Caco-2 (cell line): ENCODE measurements at regions of chr11 and their contacts with region 1.

Region 1: DNA sequence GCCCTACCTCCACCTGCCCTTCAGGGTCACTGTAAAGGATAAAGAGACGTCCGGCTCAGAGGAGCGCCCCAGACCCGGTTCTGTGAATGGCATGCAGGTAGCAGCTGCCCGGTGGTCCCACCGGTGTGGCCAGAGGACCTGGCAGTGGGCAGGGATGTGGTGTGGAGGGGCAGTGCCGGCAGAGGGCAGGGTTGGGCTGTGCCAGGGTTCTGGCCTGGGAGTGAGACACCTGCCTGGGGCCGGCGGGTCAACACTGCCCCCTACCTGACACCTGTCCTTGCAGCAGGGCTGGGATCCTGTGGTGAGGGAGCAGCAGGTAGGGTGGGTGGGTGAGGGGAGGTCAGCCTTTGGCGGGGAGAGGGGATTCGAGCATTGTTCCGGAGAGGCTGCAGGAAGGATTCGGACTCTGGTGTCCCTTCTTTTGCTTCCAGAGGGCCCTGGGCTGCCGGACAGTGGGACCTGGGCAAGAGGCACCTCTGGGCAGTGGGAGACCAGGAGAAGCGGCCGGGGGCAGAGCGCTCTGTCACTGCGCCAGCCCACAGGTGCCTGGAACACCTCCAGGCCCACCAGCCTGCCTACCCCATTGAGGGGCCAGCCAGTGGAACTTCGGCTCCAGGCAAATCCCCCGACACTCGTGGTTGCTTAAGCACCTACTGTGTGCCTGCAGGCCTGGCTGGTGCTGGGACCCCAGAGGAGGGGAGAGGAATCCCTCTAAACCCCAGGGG is 1.6 kb upstream of the PHLDA2 start:
- DNase-seq: peak; percentile 92 to 95
- H3K4me3 ChIP-seq: peak overlapping the region; percentile 91
- H3K4me3 Mint-ChIP-seq: peak overlapping the region; percentile 73
- H3K27ac Mint-ChIP-seq: peak overlapping the region; percentile 79
- H3K4me1 ChIP-seq: peaks cover 19% of the 10 kb centered on the region
- H3K4me1 Mint-ChIP-seq: no peaks in the 10 kb centered on the region
- H3K27me3 ChIP-seq: 0 out of 2 replicates have a peak, but pooled peaks cover 2% of the 10 kb centered on the region
- H3K27me3 Mint-ChIP-seq: no peaks in the 10 kb centered on the region
- CTCF ChIP-seq: peak; percentile 80 to 95

Region 2: DNA sequence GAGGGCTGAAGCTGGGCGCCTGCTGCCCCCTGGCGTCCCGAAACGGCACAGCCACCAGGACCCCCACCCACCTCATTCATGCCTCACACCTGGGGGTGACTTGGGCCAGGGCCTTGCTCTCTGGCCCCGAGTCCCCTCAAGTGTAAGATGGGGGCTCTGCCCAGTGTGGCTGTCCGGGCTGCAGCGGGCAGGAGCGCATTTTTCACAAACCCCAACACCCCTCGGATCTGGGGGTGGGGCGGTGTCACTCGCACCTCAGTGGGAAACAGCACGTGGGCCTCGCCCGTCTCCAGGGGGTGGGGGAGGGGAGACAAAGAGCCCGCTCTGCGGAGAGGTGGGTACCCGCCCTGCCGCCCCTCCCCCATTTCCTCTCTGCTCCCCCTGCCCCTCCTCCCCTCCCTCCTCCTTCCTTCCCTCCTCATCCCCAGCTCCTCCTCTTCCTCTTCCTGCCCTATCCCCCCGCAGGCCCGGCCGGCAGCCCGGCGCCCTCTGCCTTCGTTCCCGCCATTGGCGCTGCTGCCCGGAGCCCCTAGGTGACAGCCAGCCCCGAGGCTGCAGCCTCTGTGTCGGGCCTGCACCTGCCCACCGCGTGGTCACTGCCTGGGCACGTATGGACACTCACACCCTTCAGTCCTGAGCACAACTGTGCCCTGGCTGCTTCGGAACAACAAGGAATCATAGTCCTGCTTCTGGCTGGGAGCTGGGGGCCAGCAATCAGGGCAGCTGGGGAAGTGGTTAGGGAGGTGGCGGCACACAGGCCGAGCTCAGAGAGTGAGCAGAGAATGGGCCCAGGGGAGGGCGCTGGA is 38.4 kb before region 1 on chr11:
- CTCF ChIA-PET with region 1: interaction called, 9 read pairs
- POLR2A ChIA-PET with region 1: interaction called, 3 read pairs
- intact Hi-C with region 1: loop called (anchors 2 kb)
- DNase-seq: peak in 1 of 2 experiments; percentile 78
- H3K4me3 ChIP-seq: no peak overlapping the region
- H3K4me3 Mint-ChIP-seq: no peak overlapping the region
- H3K27ac Mint-ChIP-seq: no peak overlapping the region
- H3K4me1 ChIP-seq: peaks cover 31% of the 10 kb centered on the region
- H3K4me1 Mint-ChIP-seq: peaks cover 17% of the 10 kb centered on the region
- H3K27me3 ChIP-seq: no peaks in the 10 kb centered on the region
- H3K27me3 Mint-ChIP-seq: no peaks in the 10 kb centered on the region
- CTCF ChIP-seq: peak; percentile 87 to 94

Region 3: DNA sequence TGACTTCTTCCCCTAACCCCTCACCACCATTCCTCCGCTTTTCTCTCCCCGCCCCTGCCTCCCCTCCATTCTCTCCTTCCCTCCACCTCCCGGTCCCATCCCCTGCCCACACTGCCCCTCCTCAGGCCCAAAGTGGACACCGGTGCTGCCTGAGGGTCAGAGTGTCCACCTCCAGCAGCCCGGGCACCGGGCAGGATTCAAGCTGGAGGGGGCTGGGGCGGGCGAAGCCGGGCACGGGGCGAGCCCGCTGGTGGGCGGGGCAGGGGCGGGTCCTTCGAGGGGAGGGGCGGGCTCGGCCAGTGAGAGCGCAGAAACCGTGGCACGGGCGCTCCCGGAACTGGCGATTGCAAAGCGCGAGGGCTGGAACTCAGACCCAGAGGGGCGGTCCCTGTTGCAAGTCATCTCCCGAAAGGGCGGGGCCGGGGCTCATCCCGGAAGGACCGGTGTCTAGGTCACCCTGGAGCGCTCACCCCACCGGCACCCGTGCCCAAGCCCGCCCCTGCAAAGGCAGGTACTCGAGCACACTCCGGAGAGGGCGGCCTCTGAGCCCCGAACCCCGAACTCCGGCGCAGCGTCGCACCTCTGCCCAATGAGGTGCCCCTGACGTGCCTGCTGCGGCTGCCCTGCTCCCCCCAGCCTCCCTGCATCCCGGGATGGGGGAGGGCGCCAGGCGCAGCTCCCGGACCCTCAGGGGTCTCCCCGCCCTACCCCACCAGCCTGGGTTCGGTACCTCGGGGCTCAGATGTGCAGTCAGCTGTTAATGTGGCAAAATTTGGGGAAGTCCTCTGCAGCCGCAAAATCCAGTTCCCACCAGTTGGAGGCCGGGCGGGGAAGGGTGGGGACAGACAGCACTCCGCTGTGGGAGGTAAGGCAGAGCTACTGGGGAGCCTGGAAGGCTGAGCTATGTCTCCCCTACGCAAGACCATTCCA is 28.7 kb before region 1 on chr11:
- CTCF ChIA-PET with region 1: interaction called, 16 read pairs
- POLR2A ChIA-PET with region 1: interaction called, 16 read pairs
- intact Hi-C with region 1: loop called (anchors 1 kb)
- DNase-seq: peak; percentile 96 to 97
- H3K4me3 ChIP-seq: peak overlapping the region; percentile 68
- H3K4me3 Mint-ChIP-seq: peak overlapping the region; percentile 76
- H3K27ac Mint-ChIP-seq: peak overlapping the region; percentile 81
- H3K4me1 ChIP-seq: peaks cover 32% of the 10 kb centered on the region
- H3K4me1 Mint-ChIP-seq: peaks cover 22% of the 10 kb centered on the region
- H3K27me3 ChIP-seq: no peaks in the 10 kb centered on the region
- H3K27me3 Mint-ChIP-seq: no peaks in the 10 kb centered on the region
- CTCF ChIP-seq: no peak

Region 4: GRCh38 chr11:2912498-2912897 is 18.4 kb before region 1 on chr11:
- CTCF ChIA-PET with region 1: interaction called, 3 read pairs
- POLR2A ChIA-PET with region 1: interaction called, 6 read pairs
- intact Hi-C with region 1: loop called (anchors 1 kb)
- DNase-seq: peak; percentile 93 to 94
- H3K4me3 ChIP-seq: no peak overlapping the region
- H3K4me3 Mint-ChIP-seq: no peak overlapping the region
- H3K27ac Mint-ChIP-seq: peak overlapping the region; percentile 80
- H3K4me1 ChIP-seq: peaks cover 33% of the 10 kb centered on the region
- H3K4me1 Mint-ChIP-seq: peaks cover 22% of the 10 kb centered on the region
- H3K27me3 ChIP-seq: no peaks in the 10 kb centered on the region
- H3K27me3 Mint-ChIP-seq: no peaks in the 10 kb centered on the region
- CTCF ChIP-seq: no peak